Activated CD4-positive, alpha-beta memory T cell treated with anti-CD3 and anti-CD28 coated beads for 36 hours (primary cell): ENCODE measurements at regions of chr1 and their contacts with region 1.

Region 1: DNA sequence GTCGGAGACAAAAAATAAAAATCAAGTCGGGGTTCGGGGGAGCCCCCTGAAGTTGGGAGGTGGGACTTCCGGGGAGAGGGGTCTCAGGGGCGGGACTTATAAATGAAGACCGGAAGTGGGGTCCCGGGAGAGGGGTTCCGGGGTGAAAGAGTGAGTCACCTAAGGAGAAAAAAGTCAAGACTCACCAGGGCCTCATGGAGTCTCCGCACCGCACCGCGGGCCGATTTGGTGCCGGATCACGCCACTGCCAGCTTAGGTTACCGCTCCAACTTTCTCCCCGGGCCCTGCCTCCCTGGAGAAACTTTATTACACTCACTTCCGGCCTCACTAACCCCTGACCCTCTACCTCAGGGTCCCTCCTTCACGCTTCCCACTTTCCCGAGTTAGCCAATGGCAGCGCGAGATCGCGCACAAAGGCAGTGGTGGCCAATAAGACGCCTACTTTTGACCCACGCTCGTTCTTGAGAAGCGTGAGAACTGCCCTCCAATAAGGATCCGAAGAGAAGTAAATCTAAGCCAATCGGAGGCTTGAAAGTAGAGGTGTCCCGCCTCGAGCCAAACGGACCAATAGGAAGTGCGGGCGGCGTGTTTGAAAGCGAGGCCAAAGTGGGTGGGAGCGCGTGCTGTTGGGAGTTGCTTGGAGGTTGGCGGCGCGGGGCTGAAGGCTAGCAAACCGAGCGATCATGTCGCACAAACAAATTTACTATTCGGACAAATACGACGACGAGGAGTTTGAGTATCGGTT is at the start of gene CKS1B:
- DNase-seq: peak; percentile 98
- H3K4me3 Mint-ChIP-seq: no peak within 1 kb of the TSS
- H3K27ac Mint-ChIP-seq: no peak within 1 kb of the TSS
- H3K4me1 Mint-ChIP-seq: peaks cover 30% of the 10 kb centered on the region
- H3K27me3 Mint-ChIP-seq: no peaks in the 10 kb centered on the region
- total RNA-seq, gene CKS1B: 197 to 205 TPM

Region 2: DNA sequence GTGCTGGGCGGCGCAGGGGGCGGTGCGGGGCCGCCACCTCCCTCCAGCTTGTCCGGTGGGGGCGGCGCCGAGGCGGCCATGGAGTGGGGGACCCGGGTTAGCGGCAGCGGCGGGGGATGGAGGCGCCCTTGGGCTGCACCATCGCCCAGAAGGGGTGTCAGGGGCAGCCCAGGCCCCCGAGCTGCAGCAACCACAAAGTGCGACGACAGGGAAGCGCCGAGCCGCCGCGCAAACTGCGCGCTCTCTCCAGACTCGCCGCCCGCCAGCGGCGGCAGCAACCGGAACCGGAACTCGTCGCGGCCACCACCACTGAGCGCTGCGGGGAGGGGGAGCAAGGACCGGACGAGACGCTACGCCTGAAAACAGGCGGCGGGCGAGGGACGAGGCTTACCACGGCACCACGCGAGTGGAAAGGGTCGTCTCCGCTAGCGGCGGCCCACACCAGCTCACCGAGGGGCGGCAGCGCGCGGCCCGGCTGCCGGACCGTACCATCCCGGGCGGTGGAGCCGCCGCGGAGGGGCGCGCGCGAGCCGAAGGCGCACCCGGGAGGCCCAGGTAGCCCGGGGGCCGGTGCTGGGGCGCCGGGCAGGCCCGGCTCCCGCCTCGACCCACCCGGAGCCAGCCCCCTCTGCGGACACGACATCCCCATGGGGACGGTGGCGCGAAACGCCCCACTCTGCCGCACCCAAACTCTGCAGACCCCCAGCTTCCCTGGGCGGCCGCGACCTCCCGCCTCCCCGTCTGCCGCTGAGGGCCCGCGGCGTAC is 12.6 kb before region 1 on chr1 and contains the start of gene PYGO2:
- CTCF ChIA-PET with region 1: interaction called, 35 read pairs
- POLR2A ChIA-PET with region 1: interaction called, 15 read pairs
- intact Hi-C with region 1: loop called (anchors 1 kb)
- DNase-seq: peak; percentile 88
- H3K4me3 Mint-ChIP-seq: peak within 1 kb of the TSS; percentile 96
- H3K27ac Mint-ChIP-seq: peak within 1 kb of the TSS; percentile 92
- H3K4me1 Mint-ChIP-seq: peaks cover 36% of the 10 kb centered on the region
- H3K27me3 Mint-ChIP-seq: no peaks in the 10 kb centered on the region
- total RNA-seq, gene PYGO2: 31.5 to 32.4 TPM

Region 3: GRCh38 chr1:154992721-154993571 is 18.7 kb after region 1 on chr1:
- CTCF ChIA-PET with region 1: interaction called, 80 read pairs
- POLR2A ChIA-PET with region 1: interaction called, 11 read pairs
- intact Hi-C with region 1: no loop called
- DNase-seq: no peak
- H3K4me3 Mint-ChIP-seq: no peak overlapping the region
- H3K27ac Mint-ChIP-seq: no peak overlapping the region
- H3K4me1 Mint-ChIP-seq: peaks cover 21% of the 10 kb centered on the region
- H3K27me3 Mint-ChIP-seq: no peaks in the 10 kb centered on the region

Region 4: GRCh38 chr1:155038602-155039307 is 64.5 kb after region 1 on chr1:
- CTCF ChIA-PET with region 1: no interaction called
- POLR2A ChIA-PET with region 1: no interaction called
- intact Hi-C with region 1: no loop called
- DNase-seq: no peak
- H3K4me3 Mint-ChIP-seq: no peak overlapping the region
- H3K27ac Mint-ChIP-seq: no peak overlapping the region
- H3K4me1 Mint-ChIP-seq: no peaks in the 10 kb centered on the region
- H3K27me3 Mint-ChIP-seq: peaks cover 2% of the 10 kb centered on the region

Region 5: DNA sequence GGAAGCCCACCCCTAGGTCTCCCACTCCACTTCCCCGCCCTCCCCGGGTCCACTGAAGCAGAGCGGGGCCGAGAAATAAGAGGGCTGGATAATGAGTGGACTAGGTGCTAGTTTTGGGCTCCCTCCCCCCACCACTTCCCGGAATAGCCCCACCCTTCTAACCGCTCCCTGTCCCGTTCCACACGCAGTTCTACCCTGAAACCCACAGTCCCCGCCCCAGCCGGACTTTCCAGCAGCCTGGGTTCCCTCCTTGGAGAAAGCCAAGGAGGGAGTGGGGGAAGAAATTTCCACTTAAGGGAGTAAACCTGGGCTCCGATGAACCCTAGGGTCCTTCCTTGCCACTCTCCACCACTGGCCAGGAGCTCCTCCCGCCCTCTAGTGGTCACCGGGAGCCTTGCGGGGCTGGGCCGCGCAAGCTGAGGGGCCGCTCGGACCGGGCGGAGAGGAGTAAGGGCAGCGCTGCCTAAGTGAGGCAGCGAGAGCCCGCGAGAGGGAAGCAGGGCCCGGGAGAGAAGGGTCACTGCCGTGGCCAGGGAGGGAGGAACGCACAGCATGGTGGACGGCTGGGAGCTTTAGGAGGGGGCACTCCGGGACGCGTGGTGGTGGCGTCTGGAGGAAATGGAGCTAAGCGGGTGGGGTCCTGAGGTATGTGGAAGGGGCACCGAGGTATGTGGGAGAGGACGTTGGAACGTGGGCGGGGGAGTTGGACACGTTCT is 219.2 kb after region 1 on chr1:
- CTCF ChIA-PET with region 1: no interaction called
- POLR2A ChIA-PET with region 1: no interaction called
- intact Hi-C with region 1: no loop called
- DNase-seq: peak; percentile 87
- H3K4me3 Mint-ChIP-seq: peak overlapping the region; percentile 86
- H3K27ac Mint-ChIP-seq: peak overlapping the region; percentile 96
- H3K4me1 Mint-ChIP-seq: peaks cover 25% of the 10 kb centered on the region
- H3K27me3 Mint-ChIP-seq: no peaks in the 10 kb centered on the region